Motor neuron (in vitro differentiated cells): ENCODE measurements at regions of chr3 and their contacts with region 1.

Region 1: DNA sequence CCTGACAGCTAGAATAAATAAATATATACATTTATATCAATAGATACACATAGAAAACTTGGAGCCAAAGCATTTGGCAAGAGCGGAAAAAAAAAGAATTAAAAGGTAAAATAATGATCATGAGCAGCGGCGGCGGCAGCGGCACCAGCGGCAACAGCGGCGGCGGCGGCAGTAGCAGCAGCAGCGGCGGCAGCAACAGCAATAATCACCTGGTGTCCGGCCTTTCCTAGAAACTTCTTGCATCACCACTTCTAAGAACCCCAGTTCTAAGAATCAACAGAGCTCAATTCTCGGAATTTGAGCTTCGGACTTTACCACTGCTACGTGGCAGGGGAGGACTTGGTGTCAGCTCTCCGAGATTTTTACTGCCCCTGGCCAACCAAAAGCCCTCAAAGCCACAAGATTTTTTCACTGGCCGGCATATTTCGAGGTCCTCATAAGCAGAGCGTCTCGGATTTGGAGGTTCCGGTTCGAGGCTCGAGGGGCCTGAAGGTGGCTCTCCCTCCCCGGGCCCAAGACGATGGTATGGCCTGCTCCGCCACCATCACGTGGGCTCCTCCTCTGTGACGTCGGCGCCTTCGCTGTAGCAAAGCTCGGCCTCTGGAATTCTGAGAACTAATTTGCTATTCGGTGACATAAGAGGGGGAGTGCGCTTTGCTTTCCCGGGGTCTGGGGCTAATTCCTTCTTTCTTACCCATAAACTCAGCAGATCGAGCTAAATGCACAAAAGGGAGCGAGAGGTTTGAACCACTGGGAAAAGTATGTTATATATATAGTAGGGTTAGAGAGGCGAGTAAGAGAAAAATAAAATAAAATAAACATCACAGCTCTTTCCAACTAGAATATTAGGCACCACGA is at the start of gene BCL6:
- ATAC-seq: peak; percentile 48 to 83 (median 70)
- H3K4me3 ChIP-seq: peak within 1 kb of the TSS; percentile 46 to 54 (median 48)
- H3K27ac ChIP-seq: peak within 1 kb of the TSS; percentile 99
- H3K4me1 ChIP-seq: peaks cover 4 to 27% of the 10 kb centered on the region in 2 donors
- total RNA-seq, gene BCL6: 1.5 to 65.5 (median 9.5) TPM

Region 2: GRCh38 chr3:188154014-188154808 is 408.8 kb after region 1 on chr3 and contains the start of gene LPP:
- in situ Hi-C with region 1: loop called in 1 of 9 experiments (anchors 25 kb)
- ATAC-seq: peak; percentile 73 to 88 (median 86)
- H3K4me3 ChIP-seq: peak within 1 kb of the TSS; percentile 65 to 95 (median 84)
- H3K27ac ChIP-seq: peak within 1 kb of the TSS; percentile 72 to 93
- H3K4me1 ChIP-seq: peaks cover 11 to 16% of the 10 kb centered on the region in 2 donors
- total RNA-seq, gene LPP: 6.0 to 77.8 (median 15.4) TPM

Region 3: DNA sequence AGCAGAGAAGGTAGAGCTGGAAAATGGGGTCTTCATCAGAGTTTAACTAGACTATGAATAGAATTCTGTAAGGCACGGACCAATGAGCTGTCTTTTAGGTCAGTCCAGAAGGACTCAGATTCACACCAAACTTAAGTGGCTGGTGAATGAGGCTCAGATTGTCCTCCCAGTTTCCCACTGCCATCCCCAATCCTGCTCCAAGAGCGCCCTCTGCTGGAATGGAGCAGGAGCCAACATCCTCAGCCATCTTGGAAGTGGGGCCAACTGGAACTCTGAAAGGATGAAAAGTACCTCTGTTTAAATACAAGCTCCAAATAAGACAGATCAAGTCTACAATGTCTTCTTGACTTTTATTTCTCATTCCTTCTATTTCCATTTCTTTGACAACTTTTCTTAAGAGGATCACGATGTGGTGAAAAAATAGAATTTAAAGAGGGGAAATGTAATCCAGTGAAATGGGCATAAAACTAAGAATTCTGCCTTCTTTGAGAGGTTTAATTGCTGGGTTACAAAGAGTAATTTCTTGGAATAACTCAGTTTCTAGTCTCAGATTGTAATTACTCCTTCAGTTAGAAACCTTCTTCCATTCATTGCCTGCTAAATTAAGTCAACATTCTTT is 1209.3 kb after region 1 on chr3:
- in situ Hi-C with region 1: loop called in 8 of 9 experiments (anchors 5 to 25 kb)
- ATAC-seq: peak; percentile 81 to 99 (median 85)
- H3K4me3 ChIP-seq: peak overlapping the region in 1 of 5 donors; percentile 14
- H3K27ac ChIP-seq: no peak overlapping the region
- H3K4me1 ChIP-seq: no peaks in the 10 kb centered on the region

Region 4: GRCh38 chr3:189148081-189148507 is 1402.7 kb after region 1 on chr3:
- in situ Hi-C with region 1: loop called in 6 of 9 experiments (anchors 25 kb)
- ATAC-seq: peak; percentile 30 to 83 (median 58)
- H3K4me3 ChIP-seq: no peak overlapping the region
- H3K27ac ChIP-seq: no peak overlapping the region
- H3K4me1 ChIP-seq: no peaks in the 10 kb centered on the region

Region 5: DNA sequence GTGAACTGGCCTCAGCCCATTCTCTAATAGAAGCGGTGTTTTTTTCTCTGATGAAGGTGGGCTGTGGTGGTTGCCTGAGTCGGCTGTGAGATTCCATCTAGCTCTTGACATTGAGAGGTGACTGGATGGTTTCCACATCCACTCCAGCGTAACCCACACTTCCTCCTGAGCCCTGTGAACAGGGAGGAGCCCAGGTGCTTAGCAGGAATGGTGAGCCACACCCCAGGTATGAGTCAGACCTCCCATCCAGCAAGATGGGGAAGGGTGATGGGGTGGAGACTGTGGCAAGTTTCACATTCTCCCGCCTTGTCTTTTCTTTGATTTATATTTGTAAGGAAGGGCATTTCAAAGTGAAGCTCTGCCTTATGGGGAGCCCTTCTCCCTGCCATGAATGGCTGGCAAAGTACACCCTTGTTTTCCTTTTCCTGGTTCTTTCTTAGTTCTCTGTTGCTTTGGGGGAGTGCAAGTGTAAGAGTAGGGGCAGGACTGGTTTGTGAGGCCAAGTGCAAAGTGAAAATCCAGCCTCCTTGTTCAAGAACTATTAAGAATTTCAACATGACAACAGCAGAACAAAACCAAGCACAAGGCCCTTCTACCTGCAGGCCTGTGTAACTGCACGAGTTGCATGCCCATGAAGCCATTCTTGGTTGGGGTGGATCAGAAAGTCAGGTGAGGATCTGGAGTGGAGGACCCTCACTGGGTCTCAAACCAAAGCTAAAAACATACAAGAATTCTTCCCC is 1421.8 kb after region 1 on chr3:
- in situ Hi-C with region 1: loop called in 1 of 9 experiments (anchors 25 kb)
- ATAC-seq: peak in 1 of 8 experiments; percentile 47
- H3K4me3 ChIP-seq: no peak overlapping the region
- H3K27ac ChIP-seq: no peak overlapping the region
- H3K4me1 ChIP-seq: no peaks in the 10 kb centered on the region

Region 6: GRCh38 chr3:189233225-189233858 is 1487.9 kb after region 1 on chr3:
- in situ Hi-C with region 1: loop called in 1 of 9 experiments (anchors 25 kb)
- ATAC-seq: peak; percentile 46 to 100 (median 72)
- H3K4me3 ChIP-seq: no peak overlapping the region
- H3K27ac ChIP-seq: no peak overlapping the region
- H3K4me1 ChIP-seq: no peaks in the 10 kb centered on the region